WTC11 (cell line): ENCODE measurements at regions of chr9 and their contacts with region 1.

Region 1: DNA sequence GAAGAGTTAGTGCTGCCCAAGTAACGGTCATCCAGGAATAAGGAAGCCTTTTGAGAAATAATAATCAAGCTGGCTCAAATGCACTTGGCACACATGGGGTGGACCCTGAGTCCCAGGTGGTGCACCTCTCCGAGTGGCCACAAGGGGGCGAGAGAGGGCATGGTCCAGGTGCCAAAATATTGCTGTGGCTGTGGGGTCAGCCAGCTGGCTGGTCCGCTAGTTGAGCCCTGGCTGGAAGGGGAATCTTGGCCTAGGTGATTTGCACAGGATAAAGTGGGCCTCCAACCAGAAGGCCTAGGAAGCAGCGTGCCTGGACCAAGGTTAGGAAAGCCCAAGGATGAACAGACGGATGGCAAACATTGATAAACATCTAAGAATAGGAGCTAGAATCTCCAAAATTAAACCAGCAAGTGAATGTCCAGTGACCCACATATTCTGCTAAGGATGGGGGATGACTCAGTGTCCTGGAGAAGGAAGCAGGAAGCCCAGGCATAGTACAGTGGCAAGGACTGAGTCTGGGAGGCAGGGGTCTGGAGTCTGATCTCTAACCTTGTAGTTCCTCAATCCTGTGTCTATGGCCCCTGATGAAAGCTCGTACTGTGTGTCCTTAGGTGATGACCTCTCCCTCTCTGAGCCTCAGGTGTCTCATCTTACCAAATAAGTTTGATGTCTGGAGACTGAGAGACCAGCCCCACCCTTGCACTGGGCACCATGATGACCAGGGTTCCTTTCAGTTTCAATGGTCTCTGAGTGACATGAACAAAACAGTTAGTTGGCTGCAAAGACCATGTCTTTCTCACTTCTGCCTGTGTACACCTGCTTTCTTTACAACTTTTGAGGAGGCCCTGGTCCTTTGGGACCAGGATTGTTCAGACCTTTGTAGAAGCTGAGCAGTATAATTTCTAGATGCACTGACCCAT is 19.2 kb upstream of the SHB start:
- DNase-seq: peak; percentile 90
- ATAC-seq: peak; percentile 88
- H3K4me3 Mint-ChIP-seq: no peak overlapping the region
- H3K27ac Mint-ChIP-seq: no peak overlapping the region
- H3K4me1 Mint-ChIP-seq: peaks cover 25% of the 10 kb centered on the region
- H3K27me3 Mint-ChIP-seq: no peaks in the 10 kb centered on the region; the same call in 1 of the 2 replicates
- CTCF ChIP-seq: peak; percentile 98

Region 2: GRCh38 chr9:37415011-37415719 is 673.1 kb before region 1 on chr9:
- CTCF ChIA-PET with region 1: no interaction called
- POLR2A ChIA-PET with region 1: no interaction called
- DNase-seq: peak; percentile 75
- ATAC-seq: peak; percentile 70
- H3K4me3 Mint-ChIP-seq: peak overlapping the region; percentile 40
- H3K27ac Mint-ChIP-seq: peak overlapping the region; percentile 81
- H3K4me1 Mint-ChIP-seq: peaks cover 45% of the 10 kb centered on the region
- H3K27me3 Mint-ChIP-seq: peaks cover 2% of the 10 kb centered on the region; the same call in 1 of the 2 replicates
- CTCF ChIP-seq: peak; percentile 67

Region 3: GRCh38 chr9:37953775-37954437 is 134.4 kb before region 1 on chr9:
- CTCF ChIA-PET with region 1: no interaction called
- POLR2A ChIA-PET with region 1: no interaction called
- DNase-seq: no peak
- ATAC-seq: no peak
- H3K4me3 Mint-ChIP-seq: no peak overlapping the region
- H3K27ac Mint-ChIP-seq: no peak overlapping the region
- H3K4me1 Mint-ChIP-seq: no peaks in the 10 kb centered on the region
- H3K27me3 Mint-ChIP-seq: no peaks in the 10 kb centered on the region
- CTCF ChIP-seq: no peak

Region 4: GRCh38 chr9:37963936-37964739 is 124.1 kb before region 1 on chr9:
- CTCF ChIA-PET with region 1: no interaction called
- POLR2A ChIA-PET with region 1: no interaction called
- DNase-seq: no peak
- ATAC-seq: no peak; the same call in 1 of the 2 replicates
- H3K4me3 Mint-ChIP-seq: no peak overlapping the region
- H3K27ac Mint-ChIP-seq: no peak overlapping the region
- H3K4me1 Mint-ChIP-seq: peaks cover 18% of the 10 kb centered on the region
- H3K27me3 Mint-ChIP-seq: no peaks in the 10 kb centered on the region
- CTCF ChIP-seq: no peak

Region 5: DNA sequence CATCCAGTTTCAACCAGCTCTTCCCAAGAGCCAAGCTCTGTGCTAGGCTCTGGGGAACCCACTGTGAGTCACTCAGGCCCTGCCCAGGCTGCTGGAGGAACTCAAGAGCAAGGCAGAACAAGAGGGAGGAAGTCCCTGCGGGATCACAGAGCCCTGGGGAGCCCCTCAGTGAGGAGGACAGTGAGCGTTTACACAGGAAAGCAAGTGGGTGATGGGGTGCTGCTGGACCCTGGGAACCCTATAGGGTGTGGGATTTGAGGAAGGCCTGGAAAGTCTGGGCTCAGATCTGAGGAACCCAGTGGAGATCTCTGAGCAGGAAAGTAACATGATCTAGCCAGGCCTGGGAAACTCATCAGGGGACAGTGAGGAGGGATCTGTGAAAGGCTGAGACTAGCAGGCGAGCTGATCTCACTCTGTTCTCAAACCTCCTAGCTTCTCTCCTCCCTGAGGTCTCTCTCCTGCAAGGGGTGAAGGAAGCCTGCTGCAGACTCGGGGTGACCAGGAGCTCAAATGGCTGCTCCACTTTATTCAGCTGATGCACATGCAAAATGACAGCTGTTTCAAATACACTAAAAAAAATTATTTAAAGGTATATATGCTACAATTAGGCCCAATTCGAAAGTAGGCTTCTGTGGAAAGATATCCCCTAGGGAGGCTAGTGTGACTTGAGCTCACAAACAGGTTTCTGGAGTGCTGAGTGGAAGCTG is 89.2 kb before region 1 on chr9:
- CTCF ChIA-PET with region 1: interaction called, 14 read pairs
- POLR2A ChIA-PET with region 1: no interaction called
- DNase-seq: no peak
- ATAC-seq: no peak
- H3K4me3 Mint-ChIP-seq: no peak overlapping the region
- H3K27ac Mint-ChIP-seq: peak overlapping the region; percentile 30; the same call in 1 of the 2 replicates
- H3K4me1 Mint-ChIP-seq: peaks cover 15% of the 10 kb centered on the region
- H3K27me3 Mint-ChIP-seq: no peaks in the 10 kb centered on the region
- CTCF ChIP-seq: no peak

Region 6: GRCh38 chr9:38026021-38026809 is 62.1 kb before region 1 on chr9:
- CTCF ChIA-PET with region 1: interaction called, 18 read pairs
- POLR2A ChIA-PET with region 1: no interaction called
- DNase-seq: no peak
- ATAC-seq: peak; percentile 55
- H3K4me3 Mint-ChIP-seq: no peak overlapping the region
- H3K27ac Mint-ChIP-seq: peak overlapping the region; percentile 72
- H3K4me1 Mint-ChIP-seq: peaks cover 63% of the 10 kb centered on the region
- H3K27me3 Mint-ChIP-seq: no peaks in the 10 kb centered on the region
- CTCF ChIP-seq: no peak

Region 7: DNA sequence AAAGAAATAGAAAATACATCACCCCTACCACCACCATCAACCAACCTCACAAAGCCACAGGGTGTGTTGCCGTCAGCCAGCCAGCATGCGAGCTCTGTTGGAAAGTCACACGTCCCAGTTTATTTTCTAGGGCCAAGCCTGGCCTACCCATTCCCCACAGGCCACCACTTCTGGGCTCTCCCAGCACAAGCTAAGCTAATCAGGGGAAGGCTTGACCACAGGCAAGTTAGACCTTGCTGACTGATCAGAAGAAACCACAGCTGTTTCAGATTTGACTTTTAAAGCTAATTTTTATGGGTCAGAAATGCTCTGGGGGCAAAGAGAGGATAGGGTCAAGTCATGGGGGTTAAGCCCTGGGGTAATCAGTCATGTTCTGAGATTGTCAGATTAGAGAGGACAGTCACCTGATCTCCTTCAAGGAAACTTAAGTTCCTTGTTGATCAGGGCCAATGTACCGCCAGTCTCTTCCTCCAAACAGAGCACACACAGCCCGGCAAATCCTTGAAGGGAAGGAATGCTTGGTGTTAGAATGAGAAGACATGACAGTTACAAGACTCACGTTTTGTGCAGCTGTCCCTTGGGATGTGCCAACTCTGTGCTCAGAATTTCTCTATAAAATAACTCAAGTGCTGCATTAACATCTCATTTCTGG is 26.8 kb before region 1 on chr9:
- CTCF ChIA-PET with region 1: interaction called, 17 read pairs
- POLR2A ChIA-PET with region 1: no interaction called
- DNase-seq: no peak
- ATAC-seq: no peak
- H3K4me3 Mint-ChIP-seq: no peak overlapping the region
- H3K27ac Mint-ChIP-seq: no peak overlapping the region
- H3K4me1 Mint-ChIP-seq: peaks cover 73% of the 10 kb centered on the region
- H3K27me3 Mint-ChIP-seq: peaks cover 2% of the 10 kb centered on the region; the same call in 1 of the 2 replicates
- CTCF ChIP-seq: no peak

Region 8: DNA sequence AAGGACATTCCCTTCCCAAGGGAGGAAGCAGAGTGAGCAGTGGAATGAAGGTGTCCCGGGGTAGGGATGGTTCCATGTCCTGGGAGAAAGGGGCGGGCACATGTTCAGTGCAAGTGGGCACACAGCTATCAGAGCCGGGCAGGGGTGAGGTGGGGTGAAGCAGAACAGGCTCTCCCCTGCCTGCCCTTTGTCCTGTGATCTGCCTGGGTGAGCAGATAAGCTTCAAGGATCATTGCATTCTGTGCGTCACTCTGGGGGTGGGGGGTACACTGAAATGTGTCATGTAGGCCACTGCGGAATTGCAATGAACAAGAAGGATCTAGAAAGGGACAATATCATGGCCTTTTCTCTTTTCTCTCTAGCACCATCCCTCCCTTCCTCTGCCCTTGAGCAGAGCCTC is 42.5 kb after region 1 on chr9:
- CTCF ChIA-PET with region 1: interaction called, 16 read pairs
- POLR2A ChIA-PET with region 1: no interaction called
- DNase-seq: no peak
- ATAC-seq: no peak
- H3K4me3 Mint-ChIP-seq: no peak overlapping the region
- H3K27ac Mint-ChIP-seq: no peak overlapping the region
- H3K4me1 Mint-ChIP-seq: peaks cover 11% of the 10 kb centered on the region
- H3K27me3 Mint-ChIP-seq: peaks cover 13% of the 10 kb centered on the region; the same call in 1 of the 2 replicates
- CTCF ChIP-seq: no peak

Region 9: GRCh38 chr9:38160613-38161215 is 72.4 kb after region 1 on chr9:
- CTCF ChIA-PET with region 1: interaction called, 26 read pairs
- POLR2A ChIA-PET with region 1: no interaction called
- DNase-seq: peak; percentile 86
- ATAC-seq: peak; percentile 87
- H3K4me3 Mint-ChIP-seq: no peak overlapping the region
- H3K27ac Mint-ChIP-seq: no peak overlapping the region; the same call in 1 of the 2 replicates
- H3K4me1 Mint-ChIP-seq: no peaks in the 10 kb centered on the region
- H3K27me3 Mint-ChIP-seq: peaks cover 7% of the 10 kb centered on the region
- CTCF ChIP-seq: peak; percentile 91

Region 10: DNA sequence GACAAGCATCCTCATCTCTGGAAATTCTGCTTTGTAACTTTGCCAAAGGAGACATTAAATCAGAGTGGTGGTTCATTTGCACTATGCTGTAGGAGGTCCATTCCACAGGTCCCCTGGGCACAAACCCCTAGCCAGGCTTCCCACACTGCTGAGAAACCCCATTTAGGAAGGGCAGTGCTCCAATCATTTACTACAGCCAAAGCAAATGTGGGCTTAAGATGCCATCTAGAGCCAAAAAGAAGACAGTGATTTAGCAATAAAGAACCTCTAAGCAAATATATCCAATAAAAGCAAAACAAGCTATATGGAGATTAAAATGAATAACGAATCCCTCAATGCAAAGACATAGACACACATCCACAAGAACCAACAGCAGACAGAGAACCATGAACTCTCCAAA is 175.3 kb after region 1 on chr9:
- CTCF ChIA-PET with region 1: interaction called, 24 read pairs
- POLR2A ChIA-PET with region 1: no interaction called
- DNase-seq: no peak
- ATAC-seq: no peak; the same call in 1 of the 2 replicates
- H3K4me3 Mint-ChIP-seq: no peak overlapping the region
- H3K27ac Mint-ChIP-seq: no peak overlapping the region
- H3K4me1 Mint-ChIP-seq: no peaks in the 10 kb centered on the region
- H3K27me3 Mint-ChIP-seq: peaks cover 34% of the 10 kb centered on the region
- CTCF ChIP-seq: no peak